HEK293 (cell line): ENCODE measurements at regions of chr12 and their contacts with region 1.

Region 1: GRCh38 chr12:67268896-67269631 is at the start of gene CAND1:
- H3K4me3 ChIP-seq: peak within 1 kb of the TSS; percentile 90
- H3K27ac ChIP-seq: peak within 1 kb of the TSS; percentile 97
- H3K4me1 ChIP-seq: peaks cover 12% of the 10 kb centered on the region; the same call in 1 of the 2 replicates
- CTCF ChIP-seq: peak; percentile 95

Region 2: DNA sequence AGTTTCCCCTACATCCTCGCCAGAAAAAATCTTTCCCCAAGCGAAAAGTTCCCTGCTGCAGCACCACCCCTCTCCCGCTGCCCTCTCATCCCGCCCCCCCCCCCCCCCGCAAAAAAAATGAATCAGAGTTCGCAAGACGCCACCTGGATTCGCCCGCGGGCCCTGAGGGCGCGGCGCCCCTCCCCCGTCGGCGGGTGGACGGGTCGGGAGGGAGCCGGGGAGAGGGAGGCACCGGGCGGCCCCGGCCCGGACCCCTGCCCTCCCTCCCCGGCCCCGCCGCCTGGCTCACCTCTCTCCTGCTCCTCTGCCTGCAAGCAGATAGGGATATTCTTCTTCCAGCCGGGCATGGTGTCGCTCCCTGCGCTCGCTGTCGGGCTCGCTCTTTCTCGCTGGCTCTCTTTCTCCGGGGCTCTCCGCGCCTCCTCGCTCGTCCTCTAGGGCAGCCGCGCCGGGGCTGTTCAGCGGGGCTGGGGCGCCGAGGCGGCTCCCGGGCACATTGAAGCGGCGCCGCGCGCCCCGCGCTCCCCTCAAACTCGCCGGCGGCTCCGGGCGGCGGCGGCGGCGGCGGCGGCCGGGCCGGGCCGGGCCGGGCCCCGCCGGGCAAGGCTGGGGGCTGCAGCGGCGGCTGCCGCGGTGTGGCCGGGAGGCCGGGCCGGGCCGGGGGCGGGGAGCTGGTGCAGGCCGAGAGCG is 200.2 kb before region 1 on chr12:
- CTCF ChIA-PET with region 1: interaction called, 3 read pairs
- POLR2A ChIA-PET with region 1: interaction called, 10 read pairs
- H3K4me3 ChIP-seq: peak overlapping the region; percentile 83
- H3K27ac ChIP-seq: peak overlapping the region; percentile 92
- H3K4me1 ChIP-seq: peaks cover 7% of the 10 kb centered on the region; the same call in 1 of the 2 replicates
- CTCF ChIP-seq: no peak

Region 3: GRCh38 chr12:67280572-67280971 is 11.5 kb after region 1 on chr12:
- CTCF ChIA-PET with region 1: interaction called, 3 read pairs
- POLR2A ChIA-PET with region 1: interaction called, 20 read pairs
- H3K4me3 ChIP-seq: no peak overlapping the region
- H3K27ac ChIP-seq: no peak overlapping the region
- H3K4me1 ChIP-seq: peaks cover 29% of the 10 kb centered on the region
- CTCF ChIP-seq: no peak

Region 4: GRCh38 chr12:67788118-67788517 is 519.1 kb after region 1 on chr12:
- CTCF ChIA-PET with region 1: no interaction called
- POLR2A ChIA-PET with region 1: no interaction called
- H3K4me3 ChIP-seq: no peak overlapping the region
- H3K27ac ChIP-seq: no peak overlapping the region
- H3K4me1 ChIP-seq: no peaks in the 10 kb centered on the region
- CTCF ChIP-seq: no peak